Esophagus muscularis mucosa (tissue), 4 donors: ENCODE measurements at regions of chr9 and their contacts with region 1.

Region 1: DNA sequence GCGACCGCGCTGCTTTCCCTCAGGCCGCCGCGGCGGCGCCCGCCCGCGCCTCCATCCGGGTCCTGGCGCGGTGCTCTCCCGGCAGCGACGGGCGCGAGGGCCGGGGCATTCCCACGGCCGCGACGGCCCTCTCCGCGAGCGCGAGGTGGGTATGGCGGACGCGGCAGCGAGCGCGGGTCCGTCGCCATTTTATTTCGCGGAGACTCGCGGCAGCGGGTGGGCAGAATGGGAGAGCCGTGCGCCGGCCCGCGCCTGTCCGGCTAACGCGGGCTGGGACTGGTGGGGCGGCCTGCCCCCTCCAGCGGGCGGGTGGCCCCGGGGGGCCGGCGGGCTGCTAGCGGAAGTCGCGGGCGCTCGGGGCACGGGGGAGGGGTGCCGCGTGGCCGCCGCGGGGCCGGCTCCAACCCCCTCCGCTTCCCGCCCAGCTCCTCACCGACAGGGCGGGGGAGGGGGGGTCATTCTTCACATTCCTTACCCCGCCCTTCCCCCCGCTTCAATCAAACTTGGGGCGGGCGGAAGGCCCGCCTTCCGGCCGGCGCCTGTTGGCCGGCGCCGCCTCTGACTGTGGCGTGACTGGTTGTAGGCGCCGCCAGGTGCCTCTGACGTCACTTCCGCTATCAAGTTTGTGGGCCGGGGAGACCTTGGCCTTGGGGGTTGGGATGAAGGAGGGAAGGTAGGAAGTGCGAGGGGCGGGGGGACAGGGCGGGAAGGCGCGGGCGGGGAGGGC is 82.1 kb downstream of the PTPDC1 start:
- DNase-seq: peak; percentile 100
- H3K4me3 ChIP-seq: peak overlapping the region; percentile 88 to 98 (median 94)
- H3K27ac ChIP-seq: peak overlapping the region; percentile 100
- H3K4me1 ChIP-seq: peaks cover 31 to 49% (median 44%) of the 10 kb centered on the region in 4 donors
- H3K27me3 ChIP-seq: no peaks in the 10 kb centered on the region
- CTCF ChIP-seq: peak in 2 of 3 experiments; percentile 6 to 34
- EP300 ChIP-seq: peak; percentile 62
- POLR2A ChIP-seq: peak; percentile 94

Region 2: GRCh38 chr9:94134629-94135028 is 31.8 kb before region 1 on chr9:
- intact Hi-C with region 1: loop called (anchors 5 kb)
- DNase-seq: no peak
- H3K4me3 ChIP-seq: peak overlapping the region in 3 of 4 donors; percentile 16 to 29 (median 18)
- H3K27ac ChIP-seq: peak overlapping the region; percentile 88 to 93 (median 89)
- H3K4me1 ChIP-seq: peaks cover 35 to 64% (median 56%) of the 10 kb centered on the region in 4 donors
- H3K27me3 ChIP-seq: no peaks in the 10 kb centered on the region
- CTCF ChIP-seq: no peak
- EP300 ChIP-seq: no peak
- POLR2A ChIP-seq: no peak

Region 3: GRCh38 chr9:94139672-94140417 is 26.6 kb before region 1 on chr9:
- intact Hi-C with region 1: loop called (anchors 2 kb)
- DNase-seq: peak; percentile 97
- H3K4me3 ChIP-seq: peak overlapping the region; percentile 20 to 30 (median 28)
- H3K27ac ChIP-seq: peak overlapping the region; percentile 88 to 93 (median 89)
- H3K4me1 ChIP-seq: peaks cover 48 to 86% (median 80%) of the 10 kb centered on the region in 4 donors
- H3K27me3 ChIP-seq: no peaks in the 10 kb centered on the region
- CTCF ChIP-seq: no peak
- EP300 ChIP-seq: no peak
- POLR2A ChIP-seq: no peak